Body of pancreas (tissue), 4 donors: ENCODE measurements at regions of chr13 and their contacts with region 1.

Region 1: GRCh38 chr13:111474136-111475002 is 153.9 kb downstream of the TEX29 start:
- DNase-seq: peak in 2 of 4 donors; percentile 31 to 32
- ATAC-seq: peak; percentile 72
- H3K4me3 ChIP-seq: no peak overlapping the region
- H3K27ac ChIP-seq: no peak overlapping the region
- H3K4me1 ChIP-seq: no peaks in the 10 kb centered on the region
- H3K27me3 ChIP-seq: no peaks in the 10 kb centered on the region
- CTCF ChIP-seq: peak in 6 of 7 experiments; percentile 38 to 83 (median 66)
- POLR2A ChIP-seq: no peak

Region 2: GRCh38 chr13:112443995-112444860 is 969.9 kb after region 1 on chr13:
- intact Hi-C with region 1: loop called (anchors 2 kb)
- DNase-seq: peak; percentile 70 to 80 (median 78)
- ATAC-seq: peak; percentile 85
- H3K4me3 ChIP-seq: no peak overlapping the region
- H3K27ac ChIP-seq: no peak overlapping the region
- H3K4me1 ChIP-seq: no peaks in the 10 kb centered on the region
- H3K27me3 ChIP-seq: peaks cover 0 to 17% of the 10 kb centered on the region in 2 donors
- CTCF ChIP-seq: peak; percentile 77 to 93 (median 86)
- POLR2A ChIP-seq: no peak